ENCODE measurements at regions of chr10 and their contacts with region 1.

Region 1: DNA sequence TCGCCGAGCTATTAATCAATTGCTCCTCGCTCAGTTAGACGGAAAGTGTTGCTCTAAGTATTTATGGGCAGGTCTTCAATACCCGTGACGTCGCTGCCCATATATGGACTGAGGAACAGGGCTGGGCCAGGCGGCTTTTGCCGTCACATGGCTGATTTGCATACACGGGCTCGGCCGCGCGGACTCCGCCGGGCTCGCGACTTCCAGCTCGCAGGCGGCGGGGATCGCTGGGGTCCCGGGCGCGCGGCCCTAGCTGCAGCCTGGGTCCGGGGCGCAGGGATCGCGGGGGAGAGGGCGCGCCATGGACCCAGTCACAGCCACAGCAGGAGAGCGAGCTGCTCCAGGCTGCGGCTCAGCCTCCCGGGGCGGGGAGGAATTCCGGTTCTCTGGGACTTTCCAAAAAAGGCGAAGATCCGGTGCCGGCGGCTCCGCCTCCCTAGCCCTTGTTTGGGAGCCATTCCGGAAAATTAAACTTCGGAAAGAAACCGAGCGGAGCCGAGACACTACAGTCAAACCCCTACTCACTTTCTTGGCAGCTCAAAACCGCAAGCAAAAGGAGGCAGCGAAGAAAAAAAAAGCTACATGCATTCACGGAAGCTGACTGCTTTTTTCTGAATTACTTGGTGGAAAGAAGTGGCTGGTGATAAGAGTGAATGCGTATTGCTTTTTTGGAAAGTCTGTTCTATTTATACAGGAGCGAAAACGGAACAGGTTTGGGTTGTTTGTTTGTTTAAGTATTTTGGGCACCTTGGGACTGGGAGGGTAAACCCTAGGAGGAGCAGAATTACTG is at the start of gene EGR2:
- DNase-seq: peak; percentile 98
- ATAC-seq: peak; percentile 90
- total RNA-seq, gene EGR2: 1.0 TPM

Region 2: DNA sequence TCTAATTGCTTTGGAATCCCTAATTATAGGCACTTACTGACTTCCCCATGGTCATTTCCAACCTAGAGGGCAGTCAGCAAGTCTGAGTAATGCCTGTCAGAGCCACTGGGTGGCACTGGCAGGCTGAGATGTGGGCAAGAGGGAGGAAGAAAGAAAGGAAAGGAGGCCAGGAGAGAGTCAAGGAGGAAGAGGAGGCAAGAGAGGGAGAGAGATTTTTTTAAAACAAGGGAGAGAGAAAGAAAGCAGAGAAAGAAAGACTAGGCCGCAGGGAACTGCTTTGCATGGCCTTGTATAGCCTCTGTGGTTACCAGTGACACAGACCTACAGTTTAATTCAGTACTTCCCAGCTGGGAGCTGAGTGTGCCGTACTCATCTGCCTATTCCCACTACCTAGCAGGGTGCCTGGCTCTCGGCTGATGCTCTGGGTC is 222.4 kb before region 1 on chr10:
- intact Hi-C with region 1: loop called (anchors 1 kb)
- DNase-seq: no peak
- ATAC-seq: peak; percentile 89

Region 3: DNA sequence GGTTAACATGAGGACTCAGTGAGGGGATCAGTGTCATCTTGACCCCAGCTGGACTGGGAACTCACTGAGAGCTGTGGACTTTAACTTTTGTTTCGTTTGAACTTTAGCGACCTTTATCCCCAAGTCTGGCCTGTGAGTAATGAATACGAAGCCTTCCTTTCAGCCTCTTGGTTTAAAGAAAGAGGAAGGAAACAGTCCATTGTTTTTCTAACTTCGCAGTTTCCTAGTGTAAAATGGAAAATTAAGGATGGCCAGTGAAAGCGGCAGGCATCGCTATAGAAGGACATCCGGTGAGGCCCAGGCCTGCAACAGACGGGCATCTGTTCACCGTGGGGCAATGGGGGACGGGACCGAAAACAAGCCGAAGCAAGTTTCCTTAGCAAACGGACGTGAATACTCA is 56.1 kb before region 1 on chr10:
- intact Hi-C with region 1: loop called (anchors 5 kb)
- DNase-seq: no peak
- ATAC-seq: no peak

Region 4: GRCh38 chr10:62880162-62880561 is 63.6 kb after region 1 on chr10:
- intact Hi-C with region 1: no loop called
- DNase-seq: no peak
- ATAC-seq: no peak

Region 5: GRCh38 chr10:63157845-63158624 is 341.5 kb after region 1 on chr10:
- intact Hi-C with region 1: loop called (anchors 5 kb)
- DNase-seq: no peak
- ATAC-seq: peak; percentile 54